ENCODE measurements at regions of chr15 and their contacts with region 1.

Region 1: DNA sequence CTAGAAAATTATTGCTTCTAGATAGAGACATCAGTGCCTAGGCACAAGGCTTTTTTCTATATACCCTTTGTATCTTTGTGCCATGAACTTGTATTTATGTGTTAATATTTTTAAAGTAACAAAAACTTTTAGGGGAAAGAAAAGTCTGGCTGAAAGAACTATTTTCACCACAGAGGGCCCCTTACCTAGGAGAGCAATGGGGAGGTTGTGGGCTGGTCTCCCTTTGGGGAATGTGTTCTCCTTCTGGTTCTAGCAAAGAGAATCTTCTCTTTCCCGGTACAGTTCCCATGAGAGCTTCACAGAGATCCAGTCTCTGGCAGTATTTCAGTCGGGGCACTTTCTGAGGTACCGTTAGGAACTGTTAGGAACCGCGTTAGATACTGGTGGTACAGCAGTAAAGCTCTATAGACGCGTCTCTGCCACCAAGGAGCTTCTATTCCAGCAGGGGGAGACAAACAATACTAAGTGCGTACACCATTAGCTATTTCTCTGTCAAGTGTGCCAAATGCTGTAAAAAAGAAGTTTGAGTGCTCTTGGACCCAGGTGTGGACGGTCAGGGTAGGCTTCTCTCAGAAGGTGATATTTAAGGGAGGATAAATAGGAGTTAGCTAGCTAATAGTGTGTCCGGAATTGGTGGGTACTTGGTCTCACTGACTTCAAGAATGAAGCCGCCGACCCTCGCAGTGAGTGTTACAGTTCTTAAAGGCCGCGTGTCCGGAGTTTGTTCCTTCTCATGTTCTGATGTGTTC is 4.6 kb upstream of the EPB42 start:
- DNase-seq: peak; percentile 45 to 61 (median 52)
- H3K4me3 ChIP-seq: no peak overlapping the region
- H3K4me3 Mint-ChIP-seq: no peak overlapping the region
- H3K27ac ChIP-seq: no peak overlapping the region
- H3K27ac Mint-ChIP-seq: peak overlapping the region in 1 of 7 donors; percentile 43
- H3K4me1 ChIP-seq: no peaks in the 10 kb centered on the region
- H3K4me1 Mint-ChIP-seq: peaks cover 0 to 8% (median 4%) of the 10 kb centered on the region in 4 donors
- H3K27me3 ChIP-seq: no peaks in the 10 kb centered on the region
- H3K27me3 Mint-ChIP-seq: peaks cover 4 to 10% of the 10 kb centered on the region in 2 donors

Region 2: GRCh38 chr15:42140383-42141070 is 1084.8 kb before region 1 on chr15:
- CTCF ChIA-PET with region 1: no interaction called
- POLR2A ChIA-PET with region 1: no interaction called
- intact Hi-C with region 1: no loop called
- DNase-seq: no peak
- H3K4me3 ChIP-seq: no peak overlapping the region
- H3K4me3 Mint-ChIP-seq: no peak overlapping the region
- H3K27ac ChIP-seq: no peak overlapping the region
- H3K27ac Mint-ChIP-seq: peak overlapping the region in 1 of 7 donors; percentile 62
- H3K4me1 ChIP-seq: no peaks in the 10 kb centered on the region
- H3K4me1 Mint-ChIP-seq: peaks cover 0 to 3% (median 0%) of the 10 kb centered on the region in 4 donors
- H3K27me3 ChIP-seq: no peaks in the 10 kb centered on the region
- H3K27me3 Mint-ChIP-seq: peaks cover 2 to 4% of the 10 kb centered on the region in 2 donors

Region 3: DNA sequence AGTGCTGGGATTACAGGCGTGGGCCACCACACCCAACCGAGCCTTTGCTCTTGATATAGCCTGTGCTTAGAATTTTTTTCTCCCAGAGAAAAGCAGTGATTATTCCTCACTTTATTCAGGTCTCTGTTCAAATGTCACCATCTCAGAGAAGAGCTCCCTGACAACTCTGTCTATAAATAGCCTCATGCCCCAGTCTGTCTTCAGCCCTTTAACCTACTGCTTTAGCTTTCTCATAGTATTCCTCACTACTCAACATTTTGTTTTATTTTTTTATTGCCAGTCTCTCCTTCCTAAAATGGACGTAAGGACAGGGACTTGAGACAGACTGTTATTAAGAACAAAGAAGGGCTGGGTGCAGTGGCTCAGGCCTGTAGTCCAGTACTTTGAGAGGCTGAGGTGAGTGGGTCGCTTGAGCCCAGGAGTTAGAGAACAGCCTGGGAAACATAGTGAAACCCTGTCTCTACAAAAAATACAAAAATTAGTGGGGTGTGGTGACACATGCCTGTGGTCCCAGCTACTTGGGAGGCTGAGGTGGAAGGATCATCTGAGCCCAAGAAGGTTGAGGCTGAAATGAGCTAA is 226.1 kb before region 1 on chr15:
- CTCF ChIA-PET with region 1: no interaction called
- POLR2A ChIA-PET with region 1: no interaction called
- intact Hi-C with region 1: no loop called
- DNase-seq: no peak
- H3K4me3 ChIP-seq: no peak overlapping the region
- H3K4me3 Mint-ChIP-seq: no peak overlapping the region
- H3K27ac ChIP-seq: no peak overlapping the region
- H3K27ac Mint-ChIP-seq: peak overlapping the region in 1 of 7 donors; percentile 55
- H3K4me1 ChIP-seq: no peaks in the 10 kb centered on the region
- H3K4me1 Mint-ChIP-seq: peaks cover 0 to 4% (median under 1%) of the 10 kb centered on the region in 4 donors
- H3K27me3 ChIP-seq: no peaks in the 10 kb centered on the region
- H3K27me3 Mint-ChIP-seq: no peaks in the 10 kb centered on the region

Region 4: DNA sequence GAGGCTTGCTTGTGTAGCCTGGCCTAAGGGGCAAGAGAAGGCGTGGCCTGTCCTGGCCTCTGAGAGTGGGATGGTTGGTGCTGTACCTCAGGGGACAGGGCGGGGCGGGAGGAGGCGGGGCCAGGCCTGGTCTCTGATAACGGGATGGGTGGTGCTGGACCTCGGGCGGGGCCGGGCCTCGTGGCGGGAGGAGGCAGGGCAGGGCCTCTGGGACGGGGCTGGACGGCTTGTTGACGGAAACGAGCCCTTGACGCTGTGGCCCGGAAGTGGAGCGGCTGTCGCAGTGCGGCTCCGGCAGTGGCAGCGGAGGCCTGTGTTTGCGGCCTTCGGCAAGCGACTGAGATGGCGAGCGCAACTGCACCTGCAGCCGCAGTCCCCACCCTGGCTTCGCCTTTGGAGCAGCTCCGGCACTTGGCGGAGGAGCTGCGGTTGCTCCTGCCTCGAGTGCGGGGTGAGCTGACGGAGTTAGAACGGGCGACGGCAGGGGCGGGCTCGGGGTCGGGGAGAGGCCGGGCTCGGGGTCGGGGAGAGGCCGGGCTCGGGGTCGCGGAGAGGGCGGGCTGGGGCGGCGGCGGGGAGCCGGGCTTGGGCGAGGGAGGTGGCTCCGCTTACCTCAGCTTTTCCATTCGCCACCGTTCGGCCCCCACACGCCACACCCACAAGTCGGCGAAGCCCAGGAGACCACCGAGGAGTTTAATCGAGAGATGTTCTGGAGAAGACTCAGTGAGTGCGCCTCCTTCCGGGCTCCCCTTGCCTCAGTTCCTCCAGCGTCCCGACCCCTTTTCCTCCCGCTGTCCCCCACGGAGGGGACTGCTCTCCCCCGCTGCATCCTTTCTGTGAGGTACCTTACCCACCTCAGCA is 40.0 kb before region 1 on chr15 and contains the start of gene CCNDBP1:
- CTCF ChIA-PET with region 1: no interaction called
- POLR2A ChIA-PET with region 1: no interaction called
- intact Hi-C with region 1: no loop called
- DNase-seq: peak; percentile 81 to 90 (median 86)
- H3K4me3 ChIP-seq: peak within 1 kb of the TSS; percentile 85 to 92
- H3K4me3 Mint-ChIP-seq: peak within 1 kb of the TSS; percentile 94 to 99 (median 96)
- H3K27ac ChIP-seq: peak within 1 kb of the TSS; percentile 73
- H3K27ac Mint-ChIP-seq: peak within 1 kb of the TSS; percentile 92 to 98 (median 96)
- H3K4me1 ChIP-seq: peaks cover 33% of the 10 kb centered on the region
- H3K4me1 Mint-ChIP-seq: peaks cover 21 to 54% (median 35%) of the 10 kb centered on the region in 4 donors
- H3K27me3 ChIP-seq: no peaks in the 10 kb centered on the region
- H3K27me3 Mint-ChIP-seq: no peaks in the 10 kb centered on the region
- total RNA-seq, gene CCNDBP1: 127 to 128 TPM

Region 5: GRCh38 chr15:43204016-43204901 is 21.1 kb before region 1 on chr15:
- CTCF ChIA-PET with region 1: interaction called, 11 read pairs
- POLR2A ChIA-PET with region 1: no interaction called
- intact Hi-C with region 1: no loop called
- DNase-seq: peak; percentile 24 to 54 (median 34)
- H3K4me3 ChIP-seq: no peak overlapping the region
- H3K4me3 Mint-ChIP-seq: no peak overlapping the region
- H3K27ac ChIP-seq: no peak overlapping the region
- H3K27ac Mint-ChIP-seq: peak overlapping the region in 4 of 7 donors; percentile 1 to 53 (median 18)
- H3K4me1 ChIP-seq: no peaks in the 10 kb centered on the region
- H3K4me1 Mint-ChIP-seq: peaks cover 0 to 6% (median 3%) of the 10 kb centered on the region in 4 donors
- H3K27me3 ChIP-seq: no peaks in the 10 kb centered on the region
- H3K27me3 Mint-ChIP-seq: peaks cover 5 to 7% of the 10 kb centered on the region in 2 donors

Region 6: GRCh38 chr15:43275740-43276562 is 50.6 kb after region 1 on chr15:
- CTCF ChIA-PET with region 1: interaction called, 11 read pairs
- POLR2A ChIA-PET with region 1: no interaction called
- intact Hi-C with region 1: no loop called
- DNase-seq: no peak
- H3K4me3 ChIP-seq: no peak overlapping the region
- H3K4me3 Mint-ChIP-seq: no peak overlapping the region
- H3K27ac ChIP-seq: no peak overlapping the region
- H3K27ac Mint-ChIP-seq: no peak overlapping the region
- H3K4me1 ChIP-seq: peaks cover 3% of the 10 kb centered on the region
- H3K4me1 Mint-ChIP-seq: peaks cover 0 to 4% (median 0%) of the 10 kb centered on the region in 4 donors
- H3K27me3 ChIP-seq: no peaks in the 10 kb centered on the region
- H3K27me3 Mint-ChIP-seq: peaks cover 4 to 6% of the 10 kb centered on the region in 2 donors

Measured in CD4-positive, alpha-beta memory T cell (primary cell).